CD8-positive, alpha-beta T cell (primary cell): ENCODE measurements at regions of chr2 and their contacts with region 1.

Region 1: DNA sequence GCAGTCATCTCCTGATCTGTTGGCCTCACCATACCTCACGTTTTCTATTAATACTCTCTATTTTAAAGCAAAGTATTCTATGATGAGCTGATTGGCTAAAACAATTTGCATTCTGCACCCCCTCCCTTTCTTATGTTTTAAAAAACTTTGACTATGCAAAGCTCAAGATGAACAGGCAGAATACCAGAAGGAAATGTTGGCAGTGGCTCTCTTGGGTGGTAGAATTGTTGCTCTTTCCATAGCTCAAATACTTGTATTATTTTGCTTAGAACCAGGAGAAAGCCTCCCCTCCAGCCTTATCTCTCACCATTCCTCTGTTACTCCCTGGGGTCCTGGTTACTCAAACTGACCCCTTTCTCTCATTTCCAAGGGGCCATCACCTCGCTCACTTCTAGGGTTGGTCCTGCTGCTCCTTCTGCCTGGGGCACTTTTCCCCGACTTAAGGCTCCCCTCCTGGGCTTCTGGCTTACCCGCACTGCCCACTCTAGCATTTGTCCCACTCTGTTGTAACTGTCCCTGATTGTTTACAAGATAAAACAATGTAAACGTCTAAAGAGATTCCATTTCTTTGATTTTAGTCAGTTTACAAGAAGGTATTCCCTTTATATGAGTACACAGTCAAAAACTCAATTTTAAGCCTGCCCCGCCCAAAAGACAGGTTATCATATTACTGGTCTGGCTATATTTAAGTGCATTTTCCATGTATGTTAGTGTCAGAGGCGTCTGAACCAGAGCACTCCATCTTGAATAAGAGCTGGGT is 14.6 kb downstream of the GPR45 start:
- DNase-seq: no peak
- ATAC-seq: no peak
- H3K4me3 ChIP-seq: no peak overlapping the region
- H3K4me3 Mint-ChIP-seq: no peak overlapping the region
- H3K27ac ChIP-seq: no peak overlapping the region
- H3K27ac Mint-ChIP-seq: no peak overlapping the region
- H3K4me1 ChIP-seq: no peaks in the 10 kb centered on the region
- H3K4me1 Mint-ChIP-seq: no peaks in the 10 kb centered on the region
- H3K27me3 ChIP-seq: no peaks in the 10 kb centered on the region
- H3K27me3 Mint-ChIP-seq: peaks cover 2% of the 10 kb centered on the region
- CTCF ChIP-seq: no peak

Region 2: DNA sequence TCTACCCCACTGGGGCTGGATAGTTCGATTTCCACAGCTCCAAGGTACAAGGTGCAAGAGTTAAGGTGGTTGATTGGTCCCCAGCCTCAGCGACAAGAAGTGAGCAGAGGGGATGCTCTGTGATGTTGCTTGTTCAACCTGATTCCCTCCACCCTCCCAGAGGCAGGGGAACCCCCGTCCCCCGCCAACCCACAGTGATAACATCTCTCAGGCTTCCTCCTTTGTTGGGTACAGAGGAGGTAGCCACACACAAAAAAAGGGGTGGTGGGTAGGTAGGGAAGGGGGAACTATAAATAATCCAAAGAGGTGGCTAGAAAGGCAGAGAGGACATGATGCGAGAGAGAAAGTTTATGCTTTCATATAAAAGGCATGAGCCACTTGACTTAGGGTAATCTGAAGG is 595.2 kb before region 1 on chr2:
- CTCF ChIA-PET with region 1: no interaction called
- POLR2A ChIA-PET with region 1: no interaction called
- intact Hi-C with region 1: no loop called
- DNase-seq: peak in 1 of 9 experiments; percentile 3
- ATAC-seq: no peak
- H3K4me3 ChIP-seq: no peak overlapping the region
- H3K4me3 Mint-ChIP-seq: no peak overlapping the region
- H3K27ac ChIP-seq: no peak overlapping the region
- H3K27ac Mint-ChIP-seq: no peak overlapping the region
- H3K4me1 ChIP-seq: no peaks in the 10 kb centered on the region
- H3K4me1 Mint-ChIP-seq: peaks cover 6% of the 10 kb centered on the region
- H3K27me3 ChIP-seq: no peaks in the 10 kb centered on the region
- H3K27me3 Mint-ChIP-seq: peaks cover 24% of the 10 kb centered on the region
- CTCF ChIP-seq: no peak

Region 3: DNA sequence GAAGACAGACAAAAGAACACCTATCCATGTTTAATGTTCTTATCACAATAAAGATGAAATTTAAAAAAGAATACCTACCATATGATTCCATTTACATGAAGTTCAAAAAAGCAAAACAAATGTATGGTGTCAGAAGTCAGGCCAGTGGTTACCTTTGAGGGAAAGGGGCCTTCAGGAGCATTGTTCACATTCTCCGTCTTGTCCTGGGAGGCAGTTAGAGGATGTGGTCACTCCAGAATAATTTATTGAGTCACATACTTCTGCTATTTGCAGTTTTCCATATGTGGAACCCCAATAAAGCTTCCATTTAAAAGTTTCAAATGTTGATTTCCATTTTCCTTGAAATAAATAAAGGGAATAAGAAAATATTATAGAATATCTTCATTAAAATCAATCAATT is 443.9 kb before region 1 on chr2:
- CTCF ChIA-PET with region 1: no interaction called
- POLR2A ChIA-PET with region 1: no interaction called
- intact Hi-C with region 1: no loop called
- DNase-seq: no peak
- ATAC-seq: no peak
- H3K4me3 ChIP-seq: no peak overlapping the region
- H3K4me3 Mint-ChIP-seq: no peak overlapping the region
- H3K27ac ChIP-seq: no peak overlapping the region
- H3K27ac Mint-ChIP-seq: no peak overlapping the region
- H3K4me1 ChIP-seq: no peaks in the 10 kb centered on the region
- H3K4me1 Mint-ChIP-seq: no peaks in the 10 kb centered on the region
- H3K27me3 ChIP-seq: no peaks in the 10 kb centered on the region
- H3K27me3 Mint-ChIP-seq: no peaks in the 10 kb centered on the region
- CTCF ChIP-seq: no peak

Region 4: DNA sequence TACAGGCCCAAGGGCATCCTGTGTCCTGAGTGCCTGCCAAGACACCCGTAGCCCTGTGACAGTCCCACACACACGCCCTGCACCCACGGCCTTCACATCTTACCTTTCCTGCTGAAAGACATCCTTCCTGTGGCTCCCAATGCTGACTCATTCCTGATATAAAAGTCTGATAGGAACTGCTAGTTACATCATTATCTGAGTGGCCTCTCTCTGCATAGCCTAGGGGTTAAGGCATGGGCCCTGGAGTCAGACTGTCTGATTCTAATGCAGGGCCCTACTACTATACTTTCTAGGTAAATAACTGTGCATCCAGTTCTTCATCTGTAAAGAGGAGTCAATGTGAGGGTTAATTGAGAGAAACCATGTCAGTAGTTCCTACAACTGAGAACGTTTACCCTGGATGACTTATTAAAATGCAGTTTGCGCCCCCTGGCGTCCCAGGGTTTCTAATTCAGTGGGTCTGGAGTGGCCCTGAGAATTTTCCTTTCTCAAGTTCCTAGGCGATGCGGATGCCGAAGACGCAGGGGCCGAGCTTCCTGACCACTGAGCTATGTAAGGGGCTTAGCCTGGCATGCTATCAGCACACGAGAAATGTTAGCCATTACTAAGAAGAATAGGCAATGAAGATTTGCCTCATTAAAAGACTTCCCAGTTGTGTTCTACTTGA is 20.6 kb before region 1 on chr2:
- CTCF ChIA-PET with region 1: interaction called, 10 read pairs
- POLR2A ChIA-PET with region 1: no interaction called
- intact Hi-C with region 1: no loop called
- DNase-seq: peak; percentile 23 to 68 (median 58)
- ATAC-seq: no peak
- H3K4me3 ChIP-seq: no peak overlapping the region
- H3K4me3 Mint-ChIP-seq: no peak overlapping the region
- H3K27ac ChIP-seq: no peak overlapping the region
- H3K27ac Mint-ChIP-seq: no peak overlapping the region
- H3K4me1 ChIP-seq: no peaks in the 10 kb centered on the region
- H3K4me1 Mint-ChIP-seq: peaks cover 9% of the 10 kb centered on the region
- H3K27me3 ChIP-seq: no peaks in the 10 kb centered on the region
- H3K27me3 Mint-ChIP-seq: peaks cover 7% of the 10 kb centered on the region
- CTCF ChIP-seq: peak; percentile 66

Region 5: GRCh38 chr2:105287692-105288091 is 31.5 kb after region 1 on chr2:
- CTCF ChIA-PET with region 1: no interaction called
- POLR2A ChIA-PET with region 1: no interaction called
- intact Hi-C with region 1: no loop called
- DNase-seq: peak in 4 of 9 experiments; percentile 22 to 53 (median 34)
- ATAC-seq: no peak
- H3K4me3 ChIP-seq: no peak overlapping the region
- H3K4me3 Mint-ChIP-seq: no peak overlapping the region
- H3K27ac ChIP-seq: no peak overlapping the region
- H3K27ac Mint-ChIP-seq: no peak overlapping the region
- H3K4me1 ChIP-seq: no peaks in the 10 kb centered on the region
- H3K4me1 Mint-ChIP-seq: no peaks in the 10 kb centered on the region
- H3K27me3 ChIP-seq: no peaks in the 10 kb centered on the region
- H3K27me3 Mint-ChIP-seq: no peaks in the 10 kb centered on the region
- CTCF ChIP-seq: peak; percentile 36